ENCODE measurements at regions of chr15 and their contacts with region 1.

Region 1: GRCh38 chr15:74373731-74374647 is 6.5 kb upstream of the CYP11A1 start:
- DNase-seq: peak; percentile 98
- H3K4me3 ChIP-seq: peak overlapping the region; percentile 59 to 74 (median 70)
- H3K27ac ChIP-seq: peak overlapping the region in 3 of 4 donors; percentile 41 to 54 (median 52)
- H3K4me1 ChIP-seq: peaks cover 9 to 23% (median 19%) of the 10 kb centered on the region in 4 donors
- H3K27me3 ChIP-seq: no peaks in the 10 kb centered on the region
- CTCF ChIP-seq: peak; percentile 85 to 95 (median 88)
- EP300 ChIP-seq: no peak
- POLR2A ChIP-seq: no peak

Region 2: GRCh38 chr15:74422650-74423430 is 48.9 kb after region 1 on chr15:
- intact Hi-C with region 1: no loop called
- DNase-seq: no peak
- H3K4me3 ChIP-seq: no peak overlapping the region
- H3K27ac ChIP-seq: peak overlapping the region in 2 of 4 donors; percentile 19 to 68
- H3K4me1 ChIP-seq: peaks cover 6 to 14% (median 13%) of the 10 kb centered on the region in 4 donors
- H3K27me3 ChIP-seq: peaks cover 0 to 4% (median 0%) of the 10 kb centered on the region in 4 donors
- CTCF ChIP-seq: no peak
- EP300 ChIP-seq: no peak
- POLR2A ChIP-seq: no peak

Region 3: DNA sequence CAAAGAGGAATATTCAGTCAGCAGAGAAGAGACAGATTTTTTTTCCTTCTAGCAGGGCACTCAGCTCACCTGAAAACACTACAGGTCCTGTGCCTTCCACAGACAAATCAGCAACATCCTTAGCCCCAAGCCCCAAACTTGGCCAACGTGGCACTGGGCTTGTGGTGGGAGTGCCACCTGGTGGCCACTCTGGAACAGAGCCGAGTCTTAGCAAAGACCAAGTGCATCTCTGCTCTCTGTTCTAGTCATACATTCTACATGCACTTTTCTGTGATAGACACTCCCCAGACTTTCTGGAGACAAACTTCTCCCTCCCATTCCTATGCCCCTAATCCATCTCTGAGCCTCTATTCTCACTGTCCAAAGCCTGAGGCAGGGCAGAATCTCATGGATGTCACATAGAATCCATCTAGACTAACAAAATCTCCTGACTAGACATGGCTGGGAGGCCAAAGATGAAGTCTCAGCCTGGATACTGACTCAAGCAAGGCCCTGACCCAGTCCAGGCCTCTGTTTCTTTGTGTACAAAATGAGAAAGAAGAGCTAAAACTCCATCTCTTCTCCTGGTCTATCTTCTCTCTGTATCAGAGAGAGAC is 64.8 kb after region 1 on chr15:
- intact Hi-C with region 1: loop called (anchors 1 kb)
- DNase-seq: no peak
- H3K4me3 ChIP-seq: no peak overlapping the region
- H3K27ac ChIP-seq: no peak overlapping the region
- H3K4me1 ChIP-seq: peaks cover 2 to 18% (median 9%) of the 10 kb centered on the region in 4 donors
- H3K27me3 ChIP-seq: no peaks in the 10 kb centered on the region
- CTCF ChIP-seq: peak; percentile 81 to 87 (median 87)
- EP300 ChIP-seq: no peak
- POLR2A ChIP-seq: no peak

Region 4: DNA sequence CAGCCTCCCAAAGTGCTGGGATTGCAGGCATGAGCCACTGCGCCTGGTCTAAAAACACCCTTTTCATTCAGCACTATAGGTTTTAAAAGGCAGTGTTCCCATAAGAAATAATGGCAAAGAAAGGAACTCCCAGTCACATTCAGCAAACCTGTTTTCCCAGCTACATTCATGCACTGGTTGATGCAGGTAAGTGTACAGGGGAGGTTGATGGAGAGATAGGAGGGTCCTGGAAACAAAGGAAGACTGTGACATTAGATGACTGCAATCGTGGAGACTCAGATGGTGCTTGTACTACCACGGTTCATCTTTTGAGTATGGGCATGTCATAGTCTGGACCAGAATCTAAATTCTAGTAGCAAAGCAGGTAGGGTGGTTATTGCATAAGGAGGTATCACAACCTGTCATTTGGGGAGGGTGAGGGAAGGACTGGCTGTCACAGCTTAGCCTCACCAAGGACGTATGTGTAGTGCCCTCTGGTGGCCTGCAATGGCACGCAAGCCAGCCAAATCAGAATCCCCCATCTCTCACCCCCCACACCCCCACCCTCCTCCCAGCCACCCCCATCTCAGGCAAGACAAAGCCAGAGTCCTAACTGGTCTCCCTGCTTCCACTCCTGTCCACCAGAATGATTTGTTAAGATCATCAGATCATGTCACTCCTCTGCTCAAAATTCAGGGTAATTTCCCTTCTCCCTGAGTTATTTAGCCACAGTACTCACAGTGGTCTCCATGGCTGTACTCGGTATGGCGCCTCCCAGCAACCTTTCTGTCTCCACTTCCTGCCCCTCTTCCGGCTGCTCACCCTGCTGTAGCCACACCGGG is 115.7 kb after region 1 on chr15:
- intact Hi-C with region 1: loop called (anchors 5 kb)
- DNase-seq: no peak
- H3K4me3 ChIP-seq: no peak overlapping the region
- H3K27ac ChIP-seq: no peak overlapping the region
- H3K4me1 ChIP-seq: no peaks in the 10 kb centered on the region
- H3K27me3 ChIP-seq: no peaks in the 10 kb centered on the region
- CTCF ChIP-seq: peak; percentile 42 to 69 (median 48)
- EP300 ChIP-seq: no peak
- POLR2A ChIP-seq: no peak

Region 5: DNA sequence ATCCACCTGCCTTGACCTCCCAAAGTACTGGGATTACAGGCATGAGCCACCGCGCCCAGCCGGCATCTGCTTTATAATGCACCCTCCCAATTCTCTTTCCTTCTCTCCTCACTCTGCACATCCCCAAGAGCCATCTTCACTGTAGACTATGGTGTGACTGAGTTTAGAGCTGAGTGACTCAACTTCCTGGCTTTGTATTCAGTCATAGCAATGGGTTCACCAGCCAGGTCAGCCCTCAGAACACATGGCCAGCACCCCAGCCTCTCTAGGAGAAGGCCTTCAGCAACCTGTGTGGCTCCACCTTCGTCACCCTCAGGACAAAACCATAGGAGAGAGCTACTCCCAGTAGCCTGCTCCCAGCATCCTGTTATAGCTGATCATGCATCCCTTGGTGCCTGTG is 200.0 kb after region 1 on chr15:
- intact Hi-C with region 1: no loop called
- DNase-seq: no peak
- H3K4me3 ChIP-seq: no peak overlapping the region
- H3K27ac ChIP-seq: no peak overlapping the region
- H3K4me1 ChIP-seq: peaks cover 12 to 19% (median 17%) of the 10 kb centered on the region in 4 donors
- H3K27me3 ChIP-seq: no peaks in the 10 kb centered on the region
- CTCF ChIP-seq: no peak
- EP300 ChIP-seq: no peak
- POLR2A ChIP-seq: no peak

Region 6: GRCh38 chr15:74635228-74635627 is 261.2 kb after region 1 on chr15:
- intact Hi-C with region 1: loop called (anchors 10 kb)
- DNase-seq: no peak
- H3K4me3 ChIP-seq: no peak overlapping the region
- H3K27ac ChIP-seq: no peak overlapping the region
- H3K4me1 ChIP-seq: peaks cover 0 to 8% (median 0%) of the 10 kb centered on the region in 4 donors
- H3K27me3 ChIP-seq: no peaks in the 10 kb centered on the region
- CTCF ChIP-seq: peak; percentile 77 to 85 (median 79)
- EP300 ChIP-seq: no peak
- POLR2A ChIP-seq: no peak